Right cardiac atrium (tissue), 5 donors: ENCODE measurements at regions of chrX and their contacts with region 1.

Region 1: GRCh38 chrX:131841496-131842410 is 181.3 kb upstream of the STK26 start:
- DNase-seq: peak in 1 of 3 donors; percentile 40
- ATAC-seq: peak in 1 of 2 donors; percentile 83
- H3K4me3 ChIP-seq: no peak overlapping the region
- H3K27ac ChIP-seq: no peak overlapping the region
- H3K4me1 ChIP-seq: no peaks in the 10 kb centered on the region
- H3K27me3 ChIP-seq: no peaks in the 10 kb centered on the region

Region 2: DNA sequence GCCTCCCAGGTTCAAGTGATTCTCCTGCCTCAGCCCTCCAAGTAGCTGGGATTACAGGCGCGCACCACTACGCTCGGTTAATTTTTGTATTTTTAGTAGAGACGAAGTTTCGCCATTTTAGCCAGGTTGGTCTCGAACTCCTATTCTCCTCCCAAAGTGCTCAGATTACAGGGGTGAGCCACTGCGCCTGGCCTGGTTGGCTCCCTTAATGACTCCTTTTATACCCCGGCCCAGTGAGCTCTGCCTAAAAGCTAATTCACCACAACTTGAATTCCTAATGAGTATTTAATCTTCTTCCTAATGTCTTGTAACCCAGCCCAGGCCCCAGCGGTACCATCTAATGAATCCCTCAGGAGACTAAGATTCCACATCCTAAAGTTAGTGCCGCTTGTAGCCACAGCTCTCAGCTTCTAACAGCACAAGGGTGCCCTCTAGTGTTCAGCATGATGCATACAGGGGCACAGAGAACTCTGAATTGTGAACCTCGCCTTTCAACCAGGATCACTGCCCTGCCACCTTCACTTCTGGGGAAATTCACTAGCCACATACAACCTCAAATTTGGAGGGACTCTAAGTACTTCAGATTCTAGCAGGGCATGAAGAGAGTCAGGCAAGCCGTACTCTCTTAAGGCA is 208.4 kb before region 1 on chrX:
- intact Hi-C with region 1: no loop called
- DNase-seq: peak in 1 of 3 donors; percentile 31
- ATAC-seq: peak in 1 of 2 donors; percentile 74
- H3K4me3 ChIP-seq: no peak overlapping the region
- H3K27ac ChIP-seq: no peak overlapping the region
- H3K4me1 ChIP-seq: no peaks in the 10 kb centered on the region
- H3K27me3 ChIP-seq: no peaks in the 10 kb centered on the region

Region 3: DNA sequence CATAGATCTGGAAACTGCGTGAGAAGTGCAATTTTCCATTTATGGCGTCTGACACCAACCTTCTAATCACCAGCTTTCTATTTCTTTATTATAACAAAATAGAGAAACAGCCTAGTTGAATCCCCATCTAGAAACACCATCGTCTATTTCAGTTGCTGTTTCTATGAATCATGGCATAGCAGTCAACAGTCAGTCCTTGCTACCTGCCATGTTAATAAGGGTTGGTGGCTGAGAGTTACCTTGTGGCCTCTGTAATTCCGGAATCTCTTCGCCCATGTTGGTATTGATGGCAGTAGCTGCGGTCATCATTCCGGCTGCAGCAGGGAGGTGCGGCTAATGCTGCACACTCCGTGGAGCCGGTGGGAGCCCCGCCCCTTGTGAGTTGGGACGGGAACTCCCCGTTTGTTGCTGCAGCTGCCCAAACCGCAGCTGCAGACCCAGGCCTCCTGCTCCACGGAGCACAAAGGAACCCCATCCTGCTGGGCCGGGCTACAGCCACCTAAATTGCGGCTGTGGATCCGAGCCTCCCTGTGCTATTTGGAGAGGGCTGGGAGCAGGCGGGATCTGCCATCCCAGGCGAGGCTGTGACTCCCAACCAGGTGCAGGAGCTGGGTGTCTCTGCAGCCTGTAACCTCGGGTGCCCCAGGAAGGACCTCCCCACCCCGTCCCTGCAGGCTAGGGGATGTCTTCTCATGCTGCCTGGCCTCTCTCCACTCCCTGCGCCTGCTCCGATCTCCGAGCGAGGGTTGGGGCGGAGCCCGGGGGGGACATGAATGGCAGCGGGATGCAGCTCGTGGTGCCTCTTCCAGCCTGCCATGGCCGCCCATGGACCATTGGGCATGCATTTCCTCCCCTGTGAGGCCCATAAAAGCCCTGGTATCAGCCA is 66.0 kb after region 1 on chrX:
- intact Hi-C with region 1: no loop called
- DNase-seq: peak in 2 of 3 donors; percentile 7 to 45
- ATAC-seq: no peak
- H3K4me3 ChIP-seq: no peak overlapping the region
- H3K27ac ChIP-seq: no peak overlapping the region
- H3K4me1 ChIP-seq: no peaks in the 10 kb centered on the region
- H3K27me3 ChIP-seq: no peaks in the 10 kb centered on the region

Region 4: DNA sequence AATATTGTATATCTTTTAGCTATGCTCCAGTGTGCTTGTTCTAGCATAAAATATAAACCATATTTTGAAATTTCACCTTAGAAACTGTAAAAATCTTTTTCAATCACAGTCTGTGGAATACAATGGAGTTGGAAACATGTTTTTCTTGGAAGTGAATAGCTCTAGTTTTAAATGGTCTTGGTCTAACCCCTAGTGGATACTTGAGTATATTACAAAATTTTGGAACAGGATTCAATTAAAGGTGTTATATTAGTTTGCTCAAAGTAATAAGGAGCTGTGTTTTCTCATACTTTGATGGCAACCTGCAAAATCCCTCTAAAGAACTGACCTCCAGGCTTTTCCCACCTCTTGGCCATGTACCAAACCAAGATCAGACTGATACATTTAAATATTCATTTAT is 229.5 kb after region 1 on chrX:
- intact Hi-C with region 1: loop called in 1 of 4 experiments (anchors 10 kb)
- DNase-seq: no peak
- ATAC-seq: no peak
- H3K4me3 ChIP-seq: no peak overlapping the region
- H3K27ac ChIP-seq: no peak overlapping the region
- H3K4me1 ChIP-seq: no peaks in the 10 kb centered on the region
- H3K27me3 ChIP-seq: no peaks in the 10 kb centered on the region

Region 5: DNA sequence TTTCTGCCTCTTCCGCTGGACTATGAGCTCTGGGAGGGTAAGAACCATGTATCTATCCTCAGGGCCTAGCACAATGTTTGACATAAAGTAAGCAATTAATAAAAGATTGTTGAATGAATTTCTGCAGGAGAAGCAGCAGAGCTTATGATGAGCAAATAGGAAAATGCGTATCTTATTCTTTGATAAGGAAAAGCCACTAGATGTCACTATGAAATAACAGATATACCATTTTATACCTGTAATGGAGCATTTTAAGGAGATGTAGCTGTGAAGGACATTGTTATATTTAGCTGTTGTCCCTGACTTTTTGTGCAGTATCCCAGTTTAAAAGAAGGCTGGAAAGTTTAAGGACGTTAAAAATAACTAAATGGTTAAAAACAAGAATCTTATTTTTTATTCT is 794.3 kb after region 1 on chrX:
- intact Hi-C with region 1: loop called in 1 of 4 experiments (anchors 5 kb)
- DNase-seq: no peak
- ATAC-seq: no peak
- H3K4me3 ChIP-seq: no peak overlapping the region
- H3K27ac ChIP-seq: no peak overlapping the region
- H3K4me1 ChIP-seq: no peaks in the 10 kb centered on the region
- H3K27me3 ChIP-seq: no peaks in the 10 kb centered on the region